H1 (cell line): ENCODE measurements at regions of chr16 and their contacts with region 1.

Region 1: DNA sequence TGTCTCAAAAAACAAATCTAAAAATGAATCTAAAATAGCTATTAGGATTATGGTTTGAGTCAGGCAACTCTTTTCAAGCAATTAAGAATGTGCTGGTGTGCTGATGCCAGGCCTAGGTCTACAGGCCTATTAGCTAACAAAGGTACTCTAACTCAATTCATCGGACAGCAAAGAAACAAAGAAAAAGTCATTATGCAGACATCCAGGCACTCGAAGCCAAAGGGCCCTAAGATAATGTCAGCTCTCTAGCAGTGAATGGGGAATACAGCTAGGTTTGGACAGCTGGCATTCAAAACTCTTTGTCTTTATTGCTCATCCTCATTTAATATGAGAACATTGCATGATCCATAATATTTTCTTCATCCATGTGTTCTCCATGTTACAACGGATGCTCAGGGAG is 108.5 kb downstream of the TMEM114 start:
- DNase-seq: no peak
- H3K4me3 ChIP-seq: no peak overlapping the region
- H3K27ac ChIP-seq: no peak overlapping the region
- H3K4me1 ChIP-seq: no peaks in the 10 kb centered on the region
- H3K27me3 ChIP-seq: peaks cover 0 to 30% (median 14%) of the 10 kb centered on the region in 4 experiments; a peak in 6 of 7 replicates
- CTCF ChIP-seq: no peak
- EP300 ChIP-seq: no peak
- POLR2A ChIP-seq: no peak
- RAD21 ChIP-seq: no peak

Region 2: DNA sequence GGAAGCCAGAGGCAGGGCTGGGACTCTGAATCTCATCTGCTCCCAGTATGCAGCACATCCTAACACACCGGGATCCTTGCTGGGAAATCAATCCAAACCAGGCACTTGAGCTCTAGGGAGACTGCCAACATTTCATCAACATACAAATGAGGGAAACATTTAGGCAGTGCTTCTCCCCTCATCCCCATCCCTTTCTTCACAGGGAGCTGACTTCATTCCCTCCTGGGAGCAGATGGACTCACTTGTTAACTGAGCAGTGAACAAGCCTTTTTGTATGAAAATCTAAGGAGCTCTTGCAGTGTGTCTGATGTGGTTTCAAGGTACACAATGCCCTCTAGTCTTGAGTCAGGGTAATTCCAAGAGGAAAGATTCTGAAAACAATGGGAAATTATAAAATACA is 12.2 kb after region 1 on chr16:
- CTCF ChIA-PET with region 1: interaction called, 11 read pairs
- POLR2A ChIA-PET with region 1: no interaction called
- DNase-seq: peak in 1 of 2 experiments; percentile 50
- H3K4me3 ChIP-seq: no peak overlapping the region
- H3K27ac ChIP-seq: no peak overlapping the region
- H3K4me1 ChIP-seq: peaks cover 0 to 6% (median 0%) of the 10 kb centered on the region in 4 experiments; a peak in 4 of 7 replicates
- H3K27me3 ChIP-seq: peaks cover 0 to 2% (median 0%) of the 10 kb centered on the region in 4 experiments; a peak in 1 of 7 replicates
- CTCF ChIP-seq: peak in 1 of 3 experiments; percentile 28; a peak in 2 of 4 replicates
- EP300 ChIP-seq: no peak
- POLR2A ChIP-seq: no peak
- RAD21 ChIP-seq: peak; percentile 63

Region 3: GRCh38 chr16:8505327-8505991 is 23.6 kb after region 1 on chr16:
- CTCF ChIA-PET with region 1: no interaction called
- POLR2A ChIA-PET with region 1: no interaction called
- DNase-seq: no peak
- H3K4me3 ChIP-seq: no peak overlapping the region
- H3K27ac ChIP-seq: no peak overlapping the region
- H3K4me1 ChIP-seq: 0 out of 7 replicates have a peak, but pooled peaks cover 0 to 4% (median 0%) of the 10 kb centered on the region in 4 experiments
- H3K27me3 ChIP-seq: peaks cover 0 to 31% (median 13%) of the 10 kb centered on the region in 4 experiments; a peak in 6 of 7 replicates
- CTCF ChIP-seq: no peak
- EP300 ChIP-seq: no peak
- POLR2A ChIP-seq: no peak
- RAD21 ChIP-seq: no peak